ENCODE measurements at regions of chr6 and their contacts with region 1.

Region 1: GRCh38 chr6:90859612-90860011 is 272.7 kb upstream of the MAP3K7 start:
- DNase-seq: peak in 1 of 2 experiments; percentile 21
- H3K4me3 ChIP-seq: no peak overlapping the region
- H3K27ac ChIP-seq: no peak overlapping the region
- H3K4me1 ChIP-seq: no peaks in the 10 kb centered on the region
- H3K27me3 ChIP-seq: no peaks in the 10 kb centered on the region
- CTCF ChIP-seq: no peak

Region 2: GRCh38 chr6:90829311-90829710 is 30.3 kb before region 1 on chr6:
- CTCF ChIA-PET with region 1: no interaction called
- POLR2A ChIA-PET with region 1: no interaction called
- intact Hi-C with region 1: no loop called
- DNase-seq: no peak
- H3K4me3 ChIP-seq: no peak overlapping the region
- H3K27ac ChIP-seq: no peak overlapping the region
- H3K4me1 ChIP-seq: no peaks in the 10 kb centered on the region
- H3K27me3 ChIP-seq: no peaks in the 10 kb centered on the region
- CTCF ChIP-seq: no peak

Region 3: DNA sequence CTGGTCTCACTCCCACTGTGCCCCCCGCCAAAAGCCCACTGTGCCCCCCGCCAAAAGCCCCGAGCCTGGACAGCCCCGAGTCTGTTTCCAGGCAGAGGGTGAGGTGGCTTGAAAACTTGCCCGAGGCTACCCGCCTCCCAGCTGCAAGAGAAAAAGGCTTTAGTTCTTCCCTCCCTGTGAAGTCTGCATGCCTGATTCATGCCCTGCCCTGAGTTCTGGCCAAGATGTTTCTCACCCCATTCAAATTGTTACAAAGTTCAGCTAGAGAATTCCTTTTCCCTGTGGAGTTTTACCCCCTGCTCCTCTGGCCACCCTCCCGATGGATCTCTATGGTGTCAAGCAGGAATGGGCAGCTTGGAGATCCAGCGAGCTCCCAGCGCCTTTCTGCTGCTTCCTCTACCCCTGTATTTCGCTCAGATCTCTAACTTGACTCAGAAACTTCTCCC is 26.0 kb after region 1 on chr6:
- CTCF ChIA-PET with region 1: interaction called, 13 read pairs
- POLR2A ChIA-PET with region 1: no interaction called
- intact Hi-C with region 1: no loop called
- DNase-seq: peak in 1 of 2 experiments; percentile 50
- H3K4me3 ChIP-seq: no peak overlapping the region
- H3K27ac ChIP-seq: no peak overlapping the region
- H3K4me1 ChIP-seq: no peaks in the 10 kb centered on the region
- H3K27me3 ChIP-seq: no peaks in the 10 kb centered on the region
- CTCF ChIP-seq: no peak

Measured in PC-9 (cell line).